IMR-90 (cell line): ENCODE measurements at regions of chr1 and their contacts with region 1.

Region 1: DNA sequence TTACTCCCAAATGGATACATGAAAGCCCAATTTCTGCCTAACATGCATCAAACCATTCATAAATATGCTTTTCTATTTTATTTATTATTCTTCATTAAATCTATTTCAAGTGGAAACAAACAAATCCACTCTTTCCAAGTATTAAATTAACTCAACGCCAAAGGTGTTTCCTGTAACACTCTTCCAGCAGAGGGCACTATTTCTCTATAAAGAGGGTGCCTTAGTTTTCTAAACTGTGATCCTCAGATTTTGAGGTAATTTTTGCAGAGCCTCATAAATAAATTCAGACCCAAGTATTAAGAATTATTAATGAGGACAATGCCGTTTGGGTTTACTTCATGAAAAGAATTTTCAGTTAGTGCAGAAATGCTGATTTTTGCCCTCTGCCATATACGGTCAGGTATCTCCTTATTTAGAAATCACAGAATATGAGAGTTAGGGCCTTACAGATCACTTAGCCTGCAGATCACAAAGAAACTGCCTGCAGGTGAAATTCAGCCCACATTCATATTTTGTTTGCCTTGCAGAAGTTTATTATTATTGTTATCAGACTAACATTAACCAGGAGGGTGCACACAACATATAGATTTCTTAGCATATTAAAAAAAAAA is 40.1 kb upstream of the MYSM1 start:
- DNase-seq: peak; percentile 71
- ATAC-seq: peak; percentile 64; the same call in 1 of the 2 replicates
- H3K4me3 ChIP-seq: no peak overlapping the region
- H3K27ac ChIP-seq: no peak overlapping the region
- H3K4me1 ChIP-seq: no peaks in the 10 kb centered on the region
- H3K27me3 ChIP-seq: no peaks in the 10 kb centered on the region
- CTCF ChIP-seq: peak; percentile 93
- POLR2A ChIP-seq: no peak
- RAD21 ChIP-seq: peak; percentile 94

Region 2: GRCh38 chr1:58528518-58528917 is 211.4 kb before region 1 on chr1:
- CTCF ChIA-PET with region 1: no interaction called
- POLR2A ChIA-PET with region 1: no interaction called
- dilution Hi-C with region 1: no loop called
- in situ Hi-C with region 1: no loop called
- intact Hi-C with region 1: no loop called
- DNase-seq: peak; percentile 78
- ATAC-seq: peak; percentile 68
- H3K4me3 ChIP-seq: no peak overlapping the region
- H3K27ac ChIP-seq: no peak overlapping the region
- H3K4me1 ChIP-seq: no peaks in the 10 kb centered on the region
- H3K27me3 ChIP-seq: no peaks in the 10 kb centered on the region
- CTCF ChIP-seq: no peak
- POLR2A ChIP-seq: no peak
- RAD21 ChIP-seq: no peak

Region 3: DNA sequence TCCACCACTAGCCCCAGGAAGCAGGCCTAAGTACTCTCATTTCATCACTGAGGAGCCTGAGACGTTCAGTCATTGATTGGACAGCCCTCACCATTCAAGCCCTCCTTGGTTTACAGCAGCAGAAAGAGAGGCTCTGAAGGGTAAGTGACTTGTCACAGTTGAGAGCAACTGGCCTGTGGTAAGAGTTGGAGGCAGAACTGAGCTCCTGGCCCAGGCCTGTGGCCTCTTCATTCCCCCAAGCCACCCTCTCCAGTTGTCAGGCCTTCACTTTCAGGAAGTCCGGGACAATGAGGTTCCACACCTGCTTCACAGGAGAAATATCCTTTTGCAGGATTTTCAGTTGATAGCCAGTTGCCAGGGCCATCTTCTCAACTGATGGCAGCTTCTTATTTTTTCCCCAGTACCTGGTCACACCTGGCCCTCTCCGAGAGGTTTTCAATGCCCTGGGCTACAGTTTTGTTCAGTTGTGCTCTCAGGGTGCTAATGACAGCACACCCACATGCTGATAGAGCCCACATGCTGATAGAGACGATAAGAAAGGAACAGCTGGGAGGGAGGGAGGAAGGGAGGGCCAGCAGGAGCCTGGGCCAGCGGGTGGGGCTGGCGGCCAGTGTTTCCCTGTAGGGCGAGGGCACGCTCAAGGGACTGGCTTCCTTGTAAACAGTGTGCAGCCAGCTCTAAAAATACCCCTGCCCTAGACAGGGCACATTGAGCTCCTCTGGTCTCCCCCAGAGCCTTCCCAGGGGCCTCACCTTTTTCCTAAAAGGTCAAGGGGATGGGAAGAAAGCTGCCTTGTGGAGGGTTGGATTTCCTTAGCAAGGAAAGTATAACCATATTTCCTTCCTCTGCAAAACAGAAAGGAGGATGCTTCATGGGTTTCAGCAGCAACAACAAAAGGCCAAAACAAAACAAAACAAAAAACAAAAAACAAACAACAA is 156.6 kb after region 1 on chr1:
- CTCF ChIA-PET with region 1: no interaction called
- POLR2A ChIA-PET with region 1: no interaction called
- dilution Hi-C with region 1: no loop called
- in situ Hi-C with region 1: no loop called
- intact Hi-C with region 1: loop called (anchors 5 kb)
- DNase-seq: no peak
- ATAC-seq: peak; percentile 13; the same call in 1 of the 2 replicates
- H3K4me3 ChIP-seq: no peak overlapping the region
- H3K27ac ChIP-seq: no peak overlapping the region
- H3K4me1 ChIP-seq: peaks cover 18% of the 10 kb centered on the region
- H3K27me3 ChIP-seq: no peaks in the 10 kb centered on the region
- CTCF ChIP-seq: no peak
- POLR2A ChIP-seq: no peak
- RAD21 ChIP-seq: no peak